ENCODE measurements at regions of chr3 and their contacts with region 1.

Region 1: GRCh38 chr3:63993653-63994079 is 29.6 kb downstream of the PSMD6 start:
- H3K4me3 Mint-ChIP-seq: no peak overlapping the region
- H3K27ac Mint-ChIP-seq: no peak overlapping the region
- H3K4me1 Mint-ChIP-seq: peaks cover 54% of the 10 kb centered on the region
- H3K27me3 Mint-ChIP-seq: no peaks in the 10 kb centered on the region

Region 2: DNA sequence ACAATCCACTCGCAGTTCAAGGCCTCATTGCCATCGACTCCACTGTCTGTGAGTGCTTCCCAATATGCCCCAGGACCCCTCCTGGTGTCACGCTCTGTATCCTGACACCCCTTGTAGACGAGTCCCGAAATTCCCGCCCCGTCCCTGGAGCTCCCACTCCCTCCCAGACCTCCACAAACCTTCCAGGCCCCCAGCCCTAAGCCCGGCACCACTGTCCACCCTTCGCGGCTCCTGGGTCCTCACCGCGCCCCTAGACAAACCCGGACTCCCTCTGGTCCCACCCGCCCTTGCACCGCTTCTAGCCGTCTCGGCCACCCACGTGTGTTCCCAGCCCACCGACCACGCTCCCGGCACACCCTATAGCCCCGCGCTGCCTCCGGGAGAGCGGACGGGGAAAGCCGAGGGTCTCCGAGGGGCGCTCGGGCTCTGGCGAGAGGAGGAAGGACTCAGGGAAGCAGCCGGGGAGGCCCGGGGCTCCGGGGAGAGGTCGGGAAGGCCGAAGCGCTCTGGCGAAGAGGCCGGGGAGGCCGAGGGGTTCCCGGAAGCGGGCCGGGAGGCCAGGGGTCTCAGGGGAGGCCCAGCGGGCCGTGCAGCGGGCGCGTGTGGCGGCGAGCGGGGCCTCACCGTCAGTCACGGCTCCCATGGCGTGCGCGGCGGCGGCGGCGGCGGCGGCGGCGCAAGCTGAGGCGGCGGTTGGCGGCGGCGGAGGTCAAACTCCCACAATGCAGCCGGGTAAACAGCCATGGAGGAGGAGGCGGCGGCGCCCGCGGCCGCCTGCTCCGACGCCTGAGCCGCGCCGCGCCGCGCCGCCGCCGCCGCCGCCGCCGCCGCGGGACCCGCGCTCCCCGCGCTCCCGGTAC is 130.3 kb before region 1 on chr3 and contains the starts of genes ATXN7 and THOC7:
- intact Hi-C with region 1: loop called (anchors 5 kb)
- H3K4me3 Mint-ChIP-seq: peak within 1 kb of the TSS; percentile 94
- H3K27ac Mint-ChIP-seq: peak within 1 kb of the TSS; percentile 95
- H3K4me1 Mint-ChIP-seq: peaks cover 54% of the 10 kb centered on the region
- H3K27me3 Mint-ChIP-seq: no peaks in the 10 kb centered on the region

Region 3: DNA sequence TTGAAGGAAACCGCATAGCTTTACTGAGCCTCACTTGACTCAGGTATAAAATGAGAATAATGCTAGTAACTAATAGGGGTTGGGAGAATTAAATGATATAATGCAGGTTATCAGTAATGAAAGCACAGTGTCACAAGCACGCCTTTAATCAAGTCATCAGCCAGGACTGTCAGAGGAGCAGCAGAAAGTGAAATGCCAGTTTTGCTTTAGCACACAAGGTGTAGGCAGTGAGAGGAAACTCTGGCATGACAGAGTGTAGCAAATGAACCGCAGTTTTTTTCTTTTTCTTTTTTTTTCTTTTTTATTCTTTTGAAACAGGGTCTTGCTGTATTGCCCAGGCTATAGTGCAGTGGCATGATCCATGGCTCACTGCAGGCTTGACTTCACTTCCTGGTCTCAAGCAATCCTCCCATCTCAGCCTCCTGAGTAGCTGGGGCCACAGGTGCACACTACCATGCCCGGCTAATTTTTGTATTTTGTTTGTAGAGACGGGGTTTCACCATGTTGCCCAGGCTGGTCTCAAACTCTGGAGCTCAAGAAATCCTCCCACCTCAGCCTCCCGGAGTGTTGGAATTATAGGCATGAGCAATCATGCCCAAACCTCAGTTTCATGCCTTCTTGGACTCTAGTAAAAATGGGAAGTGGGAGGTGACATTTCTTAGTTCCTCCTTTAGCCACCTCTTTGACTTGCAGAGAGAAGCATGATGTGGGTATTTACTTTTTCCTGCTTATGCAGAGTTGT is 71.8 kb before region 1 on chr3:
- intact Hi-C with region 1: loop called (anchors 5 kb)
- H3K4me3 Mint-ChIP-seq: peak overlapping the region; percentile 42
- H3K27ac Mint-ChIP-seq: peak overlapping the region; percentile 66
- H3K4me1 Mint-ChIP-seq: peaks cover 88% of the 10 kb centered on the region
- H3K27me3 Mint-ChIP-seq: no peaks in the 10 kb centered on the region

Region 4: GRCh38 chr3:63955830-63956545 is 37.7 kb before region 1 on chr3:
- intact Hi-C with region 1: loop called (anchors 5 kb)
- H3K4me3 Mint-ChIP-seq: no peak overlapping the region
- H3K27ac Mint-ChIP-seq: no peak overlapping the region
- H3K4me1 Mint-ChIP-seq: peaks cover 16% of the 10 kb centered on the region
- H3K27me3 Mint-ChIP-seq: no peaks in the 10 kb centered on the region

Region 5: GRCh38 chr3:63975723-63976122 is 17.9 kb before region 1 on chr3:
- intact Hi-C with region 1: loop called (anchors 2 kb)
- H3K4me3 Mint-ChIP-seq: no peak overlapping the region
- H3K27ac Mint-ChIP-seq: peak overlapping the region; percentile 72
- H3K4me1 Mint-ChIP-seq: peaks cover 60% of the 10 kb centered on the region
- H3K27me3 Mint-ChIP-seq: no peaks in the 10 kb centered on the region

Region 6: DNA sequence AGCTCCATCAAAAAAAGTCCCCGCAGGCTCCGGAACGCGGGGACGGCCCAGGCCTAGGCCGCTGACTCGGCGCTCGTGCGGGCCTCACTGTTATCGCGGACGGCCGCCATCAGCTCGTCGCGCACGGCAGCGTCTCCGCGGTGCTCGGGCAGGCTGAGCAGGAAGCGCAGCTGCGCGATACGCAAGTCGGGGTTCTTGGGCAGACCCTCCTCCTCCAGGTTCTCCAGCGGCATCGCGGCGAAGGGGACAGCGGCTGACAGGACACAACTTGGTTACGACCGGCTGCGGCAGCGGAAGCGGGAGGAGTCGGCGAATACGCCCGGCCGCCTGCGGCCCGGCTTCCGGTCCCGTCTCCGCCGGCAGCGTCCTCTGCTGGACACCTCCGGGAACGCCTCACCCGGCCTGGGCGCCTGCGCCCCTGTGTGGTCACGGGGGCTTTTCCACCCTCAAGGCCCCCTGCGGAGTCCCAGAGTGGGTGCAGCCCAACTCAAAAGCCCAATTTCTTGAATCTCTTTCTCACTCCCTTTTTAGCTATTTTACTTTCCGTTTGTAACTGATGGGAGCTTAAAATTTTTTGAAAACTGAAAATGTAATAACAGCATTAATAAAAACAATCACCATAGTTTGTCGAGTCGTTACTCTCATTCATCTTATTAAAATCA is 29.7 kb after region 1 on chr3 and contains the start of gene PSMD6:
- intact Hi-C with region 1: loop called (anchors 2 kb)
- H3K4me3 Mint-ChIP-seq: peak within 1 kb of the TSS; percentile 89
- H3K27ac Mint-ChIP-seq: peak within 1 kb of the TSS; percentile 92
- H3K4me1 Mint-ChIP-seq: peaks cover 14% of the 10 kb centered on the region
- H3K27me3 Mint-ChIP-seq: peaks cover 15% of the 10 kb centered on the region

Region 7: GRCh38 chr3:64224826-64225610 is 231.4 kb after region 1 on chr3 and contains the start of gene PRICKLE2:
- intact Hi-C with region 1: no loop called
- H3K4me3 Mint-ChIP-seq: no peak within 1 kb of the TSS
- H3K27ac Mint-ChIP-seq: no peak within 1 kb of the TSS
- H3K4me1 Mint-ChIP-seq: no peaks in the 10 kb centered on the region
- H3K27me3 Mint-ChIP-seq: peaks cover 3% of the 10 kb centered on the region

Region 8: GRCh38 chr3:64399205-64399800 is 405.6 kb after region 1 on chr3:
- intact Hi-C with region 1: no loop called
- H3K4me3 Mint-ChIP-seq: no peak overlapping the region
- H3K27ac Mint-ChIP-seq: no peak overlapping the region
- H3K4me1 Mint-ChIP-seq: no peaks in the 10 kb centered on the region
- H3K27me3 Mint-ChIP-seq: no peaks in the 10 kb centered on the region

Measured in dendritic cell treated with granulocyte-macrophage colony-stimulating factor and Interleukin-4, amounts not matched to agents 40 ng/mL and 50 ng/mL, for 4 days (primary cell).